AG04449 (cell line): ENCODE measurements at regions of chr16 and their contacts with region 1.

Region 1: GRCh38 chr16:15704545-15704987 is 54.5 kb downstream of the NDE1 start:
- DNase-seq: no peak
- H3K4me3 ChIP-seq: no peak overlapping the region
- CTCF ChIP-seq: peak; percentile 80

Region 2: DNA sequence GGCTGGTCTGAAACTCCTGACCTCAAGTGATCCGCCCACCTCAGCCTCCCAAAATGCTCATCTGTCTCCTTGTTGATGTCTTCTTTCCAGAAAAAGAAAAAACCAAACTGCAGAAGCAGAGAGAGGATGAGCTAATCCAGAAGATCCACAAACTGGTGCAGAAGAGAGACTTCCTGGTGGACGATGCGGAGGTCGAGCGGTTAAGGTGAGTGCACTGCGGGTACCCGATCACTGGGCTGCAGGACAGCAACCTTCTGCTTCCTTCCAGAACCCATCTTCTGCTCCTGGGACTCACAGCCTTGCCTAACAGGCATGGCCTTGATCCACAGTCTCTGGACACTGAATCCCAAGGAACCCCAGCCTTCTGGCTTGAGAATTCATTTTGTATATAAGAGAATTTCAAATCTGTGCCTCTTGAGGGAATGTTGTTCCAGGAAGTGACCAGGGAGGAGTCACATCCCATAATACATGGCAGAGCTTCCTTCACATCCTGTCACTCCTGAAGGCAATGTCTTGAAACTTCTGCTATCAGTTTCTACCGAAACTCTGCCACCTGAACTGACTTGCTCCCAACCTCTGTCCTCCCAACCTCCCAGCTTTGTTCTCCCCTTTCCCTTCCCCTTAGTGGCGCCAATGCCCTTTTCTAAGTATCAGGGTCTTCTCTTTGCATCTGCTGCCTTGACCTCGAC is 123.3 kb before region 1 on chr16:
- CTCF ChIA-PET with region 1: no interaction called
- POLR2A ChIA-PET with region 1: no interaction called
- DNase-seq: no peak
- H3K4me3 ChIP-seq: no peak overlapping the region
- CTCF ChIP-seq: no peak

Region 3: DNA sequence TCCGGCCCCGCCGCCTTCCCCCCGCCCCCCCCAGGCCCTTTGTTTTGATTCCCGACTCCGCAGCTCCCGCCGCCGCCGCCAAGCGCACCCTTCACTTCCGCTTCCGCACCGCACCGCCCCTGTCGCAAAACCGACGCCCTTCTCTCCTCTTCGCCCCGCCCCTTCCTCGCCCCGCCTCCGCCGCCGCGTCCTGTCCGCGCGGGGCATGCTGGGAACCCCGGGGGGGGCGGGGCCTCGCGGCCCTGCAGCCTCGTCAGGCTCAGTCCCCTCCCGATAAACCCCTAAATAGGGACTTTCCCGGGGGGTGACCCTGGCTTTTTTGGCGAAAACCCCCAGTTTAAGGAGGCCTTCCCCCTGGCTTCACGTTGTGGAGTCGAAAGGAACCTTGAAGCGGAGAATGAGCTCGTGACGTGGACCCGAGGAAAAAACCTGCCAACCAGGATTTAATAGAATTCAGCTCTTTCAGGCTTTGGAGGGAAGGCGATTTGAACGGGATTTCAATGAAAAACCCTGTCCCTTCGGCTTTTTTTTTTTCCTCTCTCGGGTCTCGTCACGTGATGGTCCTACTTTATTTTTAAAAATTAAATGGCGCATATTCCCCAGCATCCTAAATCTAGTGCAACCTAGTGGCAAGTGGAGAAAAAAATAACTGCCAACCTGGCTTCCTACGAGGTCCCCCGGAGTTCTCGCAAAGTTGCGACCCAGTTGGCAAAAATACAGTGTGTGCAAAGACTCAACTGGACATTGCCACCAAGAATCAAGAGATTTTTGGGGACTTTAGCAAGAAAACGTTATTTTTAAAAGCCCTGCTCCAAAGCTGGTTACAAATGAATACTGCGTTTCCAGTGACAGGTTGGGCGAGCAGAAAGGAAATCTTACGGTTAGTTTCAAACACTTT is 61.3 kb before region 1 on chr16 and contains the start of gene MARF1:
- CTCF ChIA-PET with region 1: interaction called, 20 read pairs
- POLR2A ChIA-PET with region 1: interaction called, 3 read pairs
- DNase-seq: no peak
- H3K4me3 ChIP-seq: peak within 1 kb of the TSS; percentile 92
- CTCF ChIP-seq: peak; percentile 34

Region 4: GRCh38 chr16:15690296-15690695 is 14.3 kb before region 1 on chr16:
- CTCF ChIA-PET with region 1: interaction called, 79 read pairs
- POLR2A ChIA-PET with region 1: no interaction called
- DNase-seq: peak; percentile 37
- H3K4me3 ChIP-seq: no peak overlapping the region
- CTCF ChIP-seq: no peak

Region 5: DNA sequence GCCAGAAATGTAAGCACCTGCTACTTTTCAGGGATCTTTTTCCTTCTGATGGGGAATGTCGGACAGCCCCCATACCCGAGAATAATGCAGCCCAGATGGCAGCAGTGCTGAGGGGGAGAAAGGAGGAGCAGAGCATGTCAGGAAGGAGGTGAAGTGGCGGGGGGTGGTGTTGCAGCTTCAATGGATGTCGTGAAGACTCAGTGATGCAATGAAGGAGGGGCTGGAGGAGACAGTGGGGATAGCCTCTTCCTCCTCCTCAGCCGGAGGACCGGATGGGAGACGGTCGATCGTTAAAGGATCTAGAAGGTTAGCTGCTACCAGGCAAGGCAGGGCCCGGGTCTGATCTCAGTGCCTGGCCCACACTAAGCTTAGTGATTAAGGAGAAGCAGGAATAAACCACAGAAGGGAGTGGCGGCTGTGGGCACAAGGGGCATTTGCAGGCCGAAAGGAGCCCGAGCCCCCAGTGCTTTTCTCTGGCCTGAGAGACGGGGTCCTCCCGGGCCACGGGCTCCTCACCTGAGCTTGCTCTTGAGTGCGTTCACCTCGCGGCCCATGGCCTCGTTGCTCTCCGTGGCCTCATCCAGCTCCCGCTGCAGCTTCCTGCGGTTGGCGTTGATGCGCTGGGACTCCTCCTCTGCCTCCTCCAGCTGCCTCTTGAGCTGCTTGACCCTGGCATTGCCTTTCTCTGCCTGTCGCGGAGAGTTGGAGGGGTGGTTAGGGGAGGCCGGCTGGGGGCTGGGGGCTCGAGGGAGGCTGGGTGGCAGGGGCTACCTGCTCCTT is 10.0 kb after region 1 on chr16:
- CTCF ChIA-PET with region 1: interaction called, 24 read pairs
- POLR2A ChIA-PET with region 1: no interaction called
- DNase-seq: no peak
- H3K4me3 ChIP-seq: no peak overlapping the region
- CTCF ChIP-seq: no peak